A673 (cell line): ENCODE measurements at regions of chr12 and their contacts with region 1.

Region 1: DNA sequence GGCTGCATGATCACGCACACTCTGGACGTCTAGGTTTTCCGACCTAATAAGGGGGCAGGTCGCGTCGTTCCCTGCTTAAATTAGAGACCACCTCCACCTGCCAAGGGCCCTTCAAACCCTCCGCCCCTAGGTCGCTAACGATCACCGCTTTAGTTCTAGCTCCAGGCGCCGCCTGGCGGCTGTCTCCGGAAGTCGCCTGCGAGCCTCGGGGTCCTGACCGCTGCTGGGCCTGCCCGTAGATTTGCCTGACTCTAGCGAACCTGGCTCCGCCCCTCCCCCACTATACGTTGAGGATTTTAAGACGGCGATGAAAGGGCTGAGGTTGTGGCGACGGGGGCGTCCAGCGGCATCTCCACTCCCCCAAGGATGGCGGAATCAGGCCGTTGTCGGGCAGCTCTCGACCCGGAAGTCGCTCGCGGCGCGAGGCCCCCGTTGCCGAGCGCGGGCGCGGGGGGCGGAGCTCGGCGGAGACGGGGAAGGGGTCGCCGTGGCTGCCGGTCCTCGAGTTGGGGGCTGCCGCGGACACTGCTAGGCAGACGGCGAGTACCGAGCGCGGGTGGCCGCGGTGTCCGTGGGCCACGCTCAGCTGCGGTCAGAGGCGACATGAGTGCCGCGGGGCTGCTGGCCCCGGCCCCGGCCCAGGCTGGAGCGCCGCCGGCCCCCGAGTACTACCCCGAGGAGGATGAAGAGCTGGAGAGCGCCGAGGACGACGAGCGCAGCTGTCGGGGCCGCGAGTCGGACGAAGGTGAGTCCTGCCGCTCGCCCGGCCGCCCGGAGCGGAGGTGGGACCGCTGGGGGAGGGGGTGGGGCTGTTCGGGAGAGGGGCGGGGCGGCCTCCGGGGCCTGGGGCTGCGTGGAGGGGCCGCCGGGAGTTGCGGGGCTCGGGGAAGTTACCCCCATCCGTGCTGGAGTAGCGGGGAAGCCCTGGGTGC is at the start of gene SUDS3:
- DNase-seq: peak; percentile 88
- H3K4me3 ChIP-seq: peak within 1 kb of the TSS; percentile 94
- H3K27ac ChIP-seq: peak within 1 kb of the TSS; percentile 99
- H3K4me1 ChIP-seq: peaks cover 18% of the 10 kb centered on the region
- H3K27me3 ChIP-seq: no peaks in the 10 kb centered on the region
- CTCF ChIP-seq: peak; percentile 99
- total RNA-seq, gene SUDS3: 47.8 and 50.0 TPM in 2 replicates

Region 2: GRCh38 chr12:117874842-117875434 is 501.4 kb before region 1 on chr12:
- CTCF ChIA-PET with region 1: interaction called, 3 read pairs
- POLR2A ChIA-PET with region 1: no interaction called
- intact Hi-C with region 1: loop called (anchors 5 kb)
- DNase-seq: peak; percentile 73
- H3K4me3 ChIP-seq: no peak overlapping the region
- H3K27ac ChIP-seq: no peak overlapping the region
- H3K4me1 ChIP-seq: no peaks in the 10 kb centered on the region
- H3K27me3 ChIP-seq: peaks cover 24% of the 10 kb centered on the region
- CTCF ChIP-seq: peak; percentile 87

Region 3: GRCh38 chr12:118120579-118121363 is 255.6 kb before region 1 on chr12:
- CTCF ChIA-PET with region 1: interaction called, 9 read pairs
- POLR2A ChIA-PET with region 1: no interaction called
- intact Hi-C with region 1: loop called (anchors 2 kb)
- DNase-seq: peak; percentile 74
- H3K4me3 ChIP-seq: no peak overlapping the region
- H3K27ac ChIP-seq: no peak overlapping the region
- H3K4me1 ChIP-seq: no peaks in the 10 kb centered on the region
- H3K27me3 ChIP-seq: no peaks in the 10 kb centered on the region
- CTCF ChIP-seq: peak; percentile 55

Region 4: DNA sequence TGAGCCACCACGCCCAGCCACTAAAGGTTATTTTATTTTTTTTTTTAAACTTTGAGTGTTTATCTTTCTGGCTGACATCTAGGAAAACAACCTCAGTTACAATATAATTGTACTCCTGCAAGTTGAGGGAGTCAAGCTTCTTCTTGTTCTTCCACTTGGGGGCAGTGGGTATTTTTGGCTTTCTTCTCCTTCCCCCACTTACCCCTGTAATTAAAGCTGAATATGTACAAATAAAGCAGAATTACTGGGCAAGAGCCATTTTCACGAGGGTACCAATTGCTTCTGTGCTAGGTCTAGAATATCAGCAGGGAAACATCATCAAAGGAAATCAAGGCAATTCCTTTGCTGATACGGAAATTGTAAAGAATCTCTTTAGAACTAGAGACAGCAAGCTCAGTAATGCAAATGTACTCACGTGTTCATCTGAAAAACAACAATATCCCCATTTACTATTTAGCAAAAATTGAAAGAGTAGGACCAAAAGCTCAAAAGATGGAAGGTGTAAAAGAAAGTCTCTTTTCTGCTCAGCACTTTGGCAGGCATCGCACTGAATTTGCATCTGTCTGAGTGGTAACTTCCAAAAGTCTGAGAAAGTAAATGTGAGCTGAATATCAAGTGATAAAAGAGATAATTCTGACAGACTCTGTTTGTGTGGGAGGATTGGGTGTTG is 76.4 kb before region 1 on chr12:
- CTCF ChIA-PET with region 1: interaction called, 30 read pairs
- POLR2A ChIA-PET with region 1: no interaction called
- intact Hi-C with region 1: loop called (anchors 1 kb)
- DNase-seq: peak; percentile 61
- H3K4me3 ChIP-seq: peak overlapping the region; percentile 21
- H3K27ac ChIP-seq: peak overlapping the region; percentile 44
- H3K4me1 ChIP-seq: peaks cover 21% of the 10 kb centered on the region
- H3K27me3 ChIP-seq: no peaks in the 10 kb centered on the region
- CTCF ChIP-seq: peak; percentile 58

Region 5: DNA sequence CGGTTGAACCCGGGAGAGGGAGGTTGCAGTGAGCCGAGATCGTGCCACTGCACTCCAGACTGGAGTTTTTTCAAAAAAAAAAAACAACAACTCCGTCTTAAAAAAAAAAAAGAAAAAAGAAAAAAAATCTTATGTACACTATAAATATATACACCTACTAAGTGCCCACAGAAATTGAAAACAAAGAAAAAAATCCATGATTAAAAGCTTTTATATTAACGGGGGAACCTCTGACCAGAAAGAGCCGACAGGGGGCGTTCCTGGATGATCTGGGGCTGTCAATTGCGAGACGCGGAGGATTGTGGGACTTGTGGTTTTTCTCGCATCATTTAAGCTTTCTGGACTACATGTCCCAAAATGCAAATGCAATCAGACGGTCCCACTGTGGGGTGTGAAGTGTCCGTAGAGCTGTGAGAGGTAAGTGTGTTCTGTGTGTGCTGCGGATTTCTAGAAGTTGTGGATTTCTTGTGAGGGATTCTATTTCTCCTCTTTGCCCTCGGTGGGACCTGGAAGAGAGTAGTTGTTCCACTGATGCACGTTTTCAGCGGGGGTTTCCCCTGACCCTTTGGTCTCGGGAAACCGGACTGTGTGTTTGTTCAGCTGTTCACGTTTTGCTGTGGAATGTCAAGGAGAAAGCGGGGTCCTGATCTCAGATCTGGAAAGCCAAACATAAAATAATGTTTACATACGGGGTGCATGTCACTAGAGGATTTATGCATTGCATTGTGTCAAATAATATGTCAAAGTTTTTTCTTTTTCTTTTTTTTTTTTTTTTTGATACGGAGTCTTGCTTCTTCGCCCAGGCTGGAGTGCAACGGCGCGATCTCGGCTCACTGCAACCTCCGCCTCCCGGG is 1925.8 kb after region 1 on chr12 and contains the start of gene SIRT4:
- CTCF ChIA-PET with region 1: no interaction called
- POLR2A ChIA-PET with region 1: interaction called, 10 read pairs
- intact Hi-C with region 1: no loop called
- DNase-seq: peak; percentile 96
- H3K4me3 ChIP-seq: peak within 1 kb of the TSS; percentile 71
- H3K27ac ChIP-seq: peak within 1 kb of the TSS; percentile 83
- H3K4me1 ChIP-seq: peaks cover 3% of the 10 kb centered on the region
- H3K27me3 ChIP-seq: no peaks in the 10 kb centered on the region
- CTCF ChIP-seq: peak; percentile 95
- total RNA-seq, gene SIRT4: 3.7 and 4.8 TPM in 2 replicates